ENCODE measurements at regions of chr1 and their contacts with region 1.

Region 1: DNA sequence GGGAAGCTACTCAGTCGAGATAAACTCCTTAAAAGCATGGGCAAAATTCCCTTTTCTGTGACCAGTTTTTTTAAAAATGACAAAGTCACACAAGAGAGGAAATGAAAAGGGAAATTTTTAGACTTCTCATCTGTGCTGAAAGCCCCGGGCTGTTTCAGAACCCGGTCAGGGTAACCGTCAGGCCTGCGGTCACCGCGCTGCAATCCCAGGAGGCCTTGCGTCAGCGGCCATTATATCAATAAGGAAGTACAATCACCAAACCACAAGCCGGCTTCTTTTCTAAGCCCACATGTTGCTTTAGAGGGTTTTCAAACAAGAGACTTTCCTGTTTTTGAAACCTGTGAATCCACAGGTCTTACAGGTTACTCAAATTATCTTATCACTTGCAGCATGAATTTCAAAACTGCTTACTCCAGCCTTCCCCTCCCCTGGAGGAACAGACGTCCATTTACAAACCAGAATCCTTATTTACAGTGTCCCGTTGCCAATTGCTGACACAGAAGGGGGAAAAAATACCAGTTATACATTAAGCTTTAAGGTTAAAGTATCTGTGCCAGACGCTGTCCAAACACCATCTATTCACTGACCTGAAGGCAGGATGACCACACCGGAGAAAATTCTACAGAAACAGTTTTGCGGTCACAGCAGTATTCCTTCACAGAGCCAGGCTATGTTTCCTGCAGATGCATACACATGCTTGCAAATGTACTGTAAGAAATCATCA is 165.3 kb downstream of the TOMM20 start:
- DNase-seq: peak; percentile 95
- H3K4me3 ChIP-seq: no peak overlapping the region
- CTCF ChIP-seq: no peak

Region 2: GRCh38 chr1:234610348-234611152 is 352.8 kb before region 1 on chr1:
- in situ Hi-C with region 1: loop called (anchors 25 kb)
- DNase-seq: peak; percentile 96
- H3K4me3 ChIP-seq: peak overlapping the region; percentile 54
- CTCF ChIP-seq: no peak

Region 3: GRCh38 chr1:234730770-234731568 is 232.4 kb before region 1 on chr1:
- in situ Hi-C with region 1: loop called (anchors 25 kb)
- DNase-seq: peak; percentile 86
- H3K4me3 ChIP-seq: no peak overlapping the region
- CTCF ChIP-seq: no peak